Ovary (tissue), 10 donors: ENCODE measurements at regions of chr11 and their contacts with region 1.

Region 1: GRCh38 chr11:1682225-1682905 is 14.6 kb upstream of the KRTAP5-6 start:
- DNase-seq: peak in 1 of 5 donors; percentile 11
- H3K4me3 ChIP-seq: no peak overlapping the region
- H3K27ac ChIP-seq: no peak overlapping the region
- H3K4me1 ChIP-seq: no peaks in the 10 kb centered on the region
- H3K27me3 ChIP-seq: no peaks in the 10 kb centered on the region
- CTCF ChIP-seq: no peak
- EP300 ChIP-seq: no peak
- POLR2A ChIP-seq: no peak

Region 2: DNA sequence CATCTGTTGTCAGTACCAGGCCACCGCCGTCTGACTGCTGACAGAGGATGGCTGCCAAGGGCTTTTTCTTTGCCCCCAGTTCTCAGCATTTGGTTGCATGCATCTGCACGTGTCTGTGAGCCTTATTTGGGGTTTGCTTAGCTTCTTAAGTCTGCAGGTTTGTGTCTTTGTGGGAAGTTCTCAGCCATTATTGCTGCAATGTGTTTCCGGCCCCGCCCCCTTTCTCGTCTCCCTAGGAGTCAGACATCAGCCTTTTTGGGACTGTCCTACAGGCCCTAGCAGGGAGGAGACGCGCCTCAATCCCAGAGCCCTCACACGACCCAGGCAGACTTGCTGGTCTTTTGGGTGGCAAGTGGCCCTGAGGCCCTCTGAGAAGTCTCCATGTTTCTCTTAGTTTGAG is 203.8 kb before region 1 on chr11:
- intact Hi-C with region 1: no loop called
- DNase-seq: peak in 2 of 5 donors; percentile 11 to 12
- H3K4me3 ChIP-seq: no peak overlapping the region
- H3K27ac ChIP-seq: no peak overlapping the region
- H3K4me1 ChIP-seq: peaks cover 16% of the 10 kb centered on the region
- H3K27me3 ChIP-seq: no peaks in the 10 kb centered on the region
- CTCF ChIP-seq: no peak
- EP300 ChIP-seq: no peak
- POLR2A ChIP-seq: no peak

Region 3: DNA sequence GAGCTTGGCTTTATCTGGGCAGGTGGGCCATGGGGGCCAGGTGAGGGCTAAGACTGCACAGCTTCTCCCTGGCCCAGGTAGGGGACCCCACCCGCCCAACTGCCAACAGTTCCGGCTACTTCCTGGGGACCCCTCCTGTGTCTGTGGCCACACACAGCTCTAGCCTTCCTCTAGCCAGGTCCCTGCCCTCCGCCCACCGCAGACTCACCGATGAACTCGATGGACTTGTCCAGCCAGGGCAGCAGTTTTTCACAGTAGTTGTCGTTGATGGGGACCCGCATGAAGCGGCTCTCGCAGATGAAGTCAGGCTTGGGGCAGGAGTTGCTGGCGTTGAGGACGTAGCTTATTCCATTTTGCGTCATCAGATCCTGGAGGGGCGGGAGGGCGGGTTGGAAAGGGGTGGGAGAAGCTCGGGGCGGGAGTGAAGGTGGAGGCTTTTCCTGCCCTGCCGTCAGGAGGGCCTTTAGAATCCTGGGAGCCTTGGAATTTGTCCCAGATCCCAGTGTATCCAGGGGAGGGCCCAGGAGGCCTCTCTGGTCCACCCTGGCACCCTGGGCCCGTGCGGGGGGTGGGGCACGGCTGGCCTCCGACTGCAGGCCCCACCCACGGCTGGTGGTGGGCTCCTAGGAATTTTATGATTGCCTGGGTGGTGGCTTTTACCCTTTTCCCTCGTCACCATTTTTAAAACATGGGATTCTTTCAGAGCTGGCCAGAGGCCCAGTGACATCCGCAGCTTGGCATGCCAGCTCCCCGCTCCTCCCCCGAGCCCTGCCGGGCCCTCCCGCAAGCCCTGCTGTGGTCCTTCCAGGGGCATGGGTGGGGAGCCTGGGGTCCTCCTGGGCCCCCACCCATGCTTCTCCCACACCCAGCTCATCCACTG is 124.2 kb before region 1 on chr11:
- intact Hi-C with region 1: no loop called
- DNase-seq: peak in 3 of 5 donors; percentile 51 to 62 (median 58)
- H3K4me3 ChIP-seq: no peak overlapping the region
- H3K27ac ChIP-seq: peak overlapping the region; percentile 46 to 51
- H3K4me1 ChIP-seq: peaks cover 6% of the 10 kb centered on the region
- H3K27me3 ChIP-seq: no peaks in the 10 kb centered on the region
- CTCF ChIP-seq: no peak
- EP300 ChIP-seq: peak; percentile 32
- POLR2A ChIP-seq: no peak

Region 4: GRCh38 chr11:1667906-1668305 is 14.5 kb before region 1 on chr11:
- intact Hi-C with region 1: loop called in 1 of 4 experiments (anchors 2 kb)
- DNase-seq: no peak
- H3K4me3 ChIP-seq: no peak overlapping the region
- H3K27ac ChIP-seq: no peak overlapping the region
- H3K4me1 ChIP-seq: no peaks in the 10 kb centered on the region
- H3K27me3 ChIP-seq: no peaks in the 10 kb centered on the region
- CTCF ChIP-seq: no peak
- EP300 ChIP-seq: no peak
- POLR2A ChIP-seq: no peak

Region 5: GRCh38 chr11:1706634-1707400 is 24.5 kb after region 1 on chr11:
- intact Hi-C with region 1: no loop called
- DNase-seq: no peak
- H3K4me3 ChIP-seq: no peak overlapping the region
- H3K27ac ChIP-seq: no peak overlapping the region
- H3K4me1 ChIP-seq: no peaks in the 10 kb centered on the region
- H3K27me3 ChIP-seq: no peaks in the 10 kb centered on the region
- CTCF ChIP-seq: no peak
- EP300 ChIP-seq: no peak
- POLR2A ChIP-seq: no peak